ENCODE measurements at regions of chr6 and their contacts with region 1.

Region 1: GRCh38 chr6:70839286-70840266 is 117.3 kb downstream of the B3GAT2 start:
- DNase-seq: no peak
- H3K4me3 Mint-ChIP-seq: no peak overlapping the region
- H3K27ac Mint-ChIP-seq: no peak overlapping the region
- H3K4me1 Mint-ChIP-seq: no peaks in the 10 kb centered on the region
- H3K27me3 Mint-ChIP-seq: no peaks in the 10 kb centered on the region

Region 2: GRCh38 chr6:69907981-69908498 is 931.5 kb before region 1 on chr6:
- CTCF ChIA-PET with region 1: no interaction called
- POLR2A ChIA-PET with region 1: no interaction called
- DNase-seq: no peak
- H3K4me3 Mint-ChIP-seq: no peak overlapping the region
- H3K27ac Mint-ChIP-seq: no peak overlapping the region
- H3K4me1 Mint-ChIP-seq: no peaks in the 10 kb centered on the region
- H3K27me3 Mint-ChIP-seq: peaks cover 3% of the 10 kb centered on the region

Region 3: DNA sequence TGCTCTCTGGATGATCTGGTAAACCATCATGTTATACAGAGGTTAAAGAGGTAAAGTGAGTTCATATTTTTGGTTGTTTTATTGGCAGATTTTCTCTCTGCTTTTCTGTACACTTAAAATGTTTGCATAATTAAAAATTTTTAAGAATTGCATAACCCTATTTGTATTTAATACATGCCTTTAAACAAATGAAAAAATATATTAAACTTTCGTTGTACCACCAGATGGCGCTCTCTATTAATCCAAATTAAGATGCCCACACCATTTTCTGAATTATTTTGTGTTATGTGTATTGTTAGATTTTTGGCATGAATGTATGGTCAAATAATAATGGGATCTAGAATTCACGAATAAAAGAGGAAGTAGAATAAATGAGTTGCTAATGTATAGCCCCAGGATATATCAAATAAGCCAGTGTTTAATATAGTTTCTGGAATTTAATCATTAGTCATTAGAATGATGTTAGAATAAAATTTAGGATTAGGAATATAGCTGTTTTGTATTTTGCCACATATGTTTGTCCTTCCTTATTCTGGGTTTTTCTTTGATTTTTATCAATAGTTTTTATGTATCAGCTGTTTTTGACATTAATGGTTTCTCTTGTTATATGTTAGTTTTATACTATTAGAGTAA is 133.0 kb before region 1 on chr6:
- CTCF ChIA-PET with region 1: no interaction called
- POLR2A ChIA-PET with region 1: no interaction called
- DNase-seq: peak; percentile 26
- H3K4me3 Mint-ChIP-seq: no peak overlapping the region
- H3K27ac Mint-ChIP-seq: no peak overlapping the region
- H3K4me1 Mint-ChIP-seq: peaks cover 19% of the 10 kb centered on the region
- H3K27me3 Mint-ChIP-seq: no peaks in the 10 kb centered on the region

Region 4: DNA sequence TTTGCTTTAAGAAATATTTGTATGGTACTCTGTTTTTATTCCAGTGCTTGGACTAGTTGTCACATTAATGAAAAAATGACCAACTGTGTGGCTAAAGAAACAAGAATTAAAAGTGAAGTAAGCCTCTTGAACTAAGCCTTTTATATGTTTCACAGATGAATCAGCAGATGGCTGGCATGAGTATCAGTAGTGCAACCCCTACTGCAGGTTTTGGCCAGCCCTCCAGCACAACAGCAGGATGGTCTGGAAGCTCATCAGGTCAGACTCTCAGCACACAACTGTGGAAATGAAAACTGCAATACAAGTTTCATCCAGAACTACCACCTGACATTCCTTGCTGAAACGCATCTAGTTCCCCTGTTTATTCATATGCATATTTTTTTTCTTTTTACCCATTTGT is 20.5 kb after region 1 on chr6:
- CTCF ChIA-PET with region 1: no interaction called
- POLR2A ChIA-PET with region 1: no interaction called
- DNase-seq: no peak
- H3K4me3 Mint-ChIP-seq: no peak overlapping the region
- H3K27ac Mint-ChIP-seq: no peak overlapping the region
- H3K4me1 Mint-ChIP-seq: no peaks in the 10 kb centered on the region
- H3K27me3 Mint-ChIP-seq: no peaks in the 10 kb centered on the region

Region 5: GRCh38 chr6:71766146-71766760 is 926.7 kb after region 1 on chr6:
- CTCF ChIA-PET with region 1: no interaction called
- POLR2A ChIA-PET with region 1: no interaction called
- DNase-seq: no peak
- H3K4me3 Mint-ChIP-seq: no peak overlapping the region
- H3K27ac Mint-ChIP-seq: no peak overlapping the region
- H3K4me1 Mint-ChIP-seq: no peaks in the 10 kb centered on the region
- H3K27me3 Mint-ChIP-seq: no peaks in the 10 kb centered on the region

Region 6: GRCh38 chr6:72704979-72705378 is 1865.4 kb after region 1 on chr6:
- CTCF ChIA-PET with region 1: no interaction called
- POLR2A ChIA-PET with region 1: interaction called, 10 read pairs
- DNase-seq: no peak
- H3K4me3 Mint-ChIP-seq: no peak overlapping the region
- H3K27ac Mint-ChIP-seq: no peak overlapping the region
- H3K4me1 Mint-ChIP-seq: no peaks in the 10 kb centered on the region
- H3K27me3 Mint-ChIP-seq: no peaks in the 10 kb centered on the region

Measured in activated CD4-positive, alpha-beta T cell treated with anti-CD3 and anti-CD28 coated beads, Interleukin-2, amount 10 ng/mL, durations not matched to agents 7 days and 5 days (primary cell).